Adrenal gland (tissue), 19 donors: ENCODE measurements at regions of chr2 and their contacts with region 1.

Region 1: GRCh38 chr2:181466661-181467576 is 9.7 kb downstream of the ITGA4 start:
- DNase-seq: peak; percentile 32 to 83 (median 62)
- H3K4me3 ChIP-seq: no peak overlapping the region
- H3K27ac ChIP-seq: no peak overlapping the region
- H3K4me1 ChIP-seq: no peaks in the 10 kb centered on the region
- H3K27me3 ChIP-seq: no peaks in the 10 kb centered on the region
- CTCF ChIP-seq: peak; percentile 39 to 79 (median 58)
- POLR2A ChIP-seq: no peak

Region 2: GRCh38 chr2:181117206-181117925 is 349.6 kb before region 1 on chr2:
- intact Hi-C with region 1: loop called in 1 of 2 experiments (anchors 10 kb)
- DNase-seq: peak in 3 of 7 donors; percentile 8 to 34 (median 27)
- H3K4me3 ChIP-seq: no peak overlapping the region
- H3K27ac ChIP-seq: no peak overlapping the region
- H3K4me1 ChIP-seq: no peaks in the 10 kb centered on the region
- H3K27me3 ChIP-seq: no peaks in the 10 kb centered on the region
- CTCF ChIP-seq: no peak
- POLR2A ChIP-seq: no peak

Region 3: DNA sequence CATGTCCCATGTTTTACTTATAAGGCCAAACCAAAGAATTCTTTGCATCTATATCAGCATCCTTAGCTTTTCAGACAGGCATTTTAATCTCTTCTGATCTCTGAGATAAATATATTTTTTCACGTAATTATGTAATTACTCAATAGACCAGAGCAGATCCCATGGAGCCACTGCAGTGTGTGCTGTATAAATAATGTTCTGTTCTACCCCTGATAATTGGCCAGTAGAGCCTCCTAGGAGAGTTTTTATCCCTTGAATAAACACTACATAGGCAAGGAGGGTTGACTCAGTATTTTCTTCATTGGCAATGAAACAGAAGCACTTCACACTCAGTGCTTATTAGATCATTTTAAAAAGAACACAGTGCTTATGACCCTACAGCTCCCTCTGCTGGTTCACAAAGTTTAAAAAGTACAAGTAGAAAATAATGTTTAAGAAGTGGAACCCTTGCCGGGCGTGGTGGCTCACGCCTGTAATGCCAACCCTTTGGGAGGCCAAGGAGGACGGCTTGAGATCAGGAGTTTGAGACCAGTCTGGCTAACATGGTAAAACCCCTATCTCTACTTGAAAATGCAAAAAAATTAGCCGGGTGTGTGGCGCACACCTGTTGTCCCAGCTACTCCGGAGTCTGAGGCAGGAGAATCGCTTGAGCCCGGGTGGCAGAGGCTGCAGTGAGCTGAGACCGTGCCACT is 610.7 kb after region 1 on chr2:
- intact Hi-C with region 1: no loop called
- DNase-seq: peak in 4 of 7 donors; percentile 41 to 50 (median 44)
- H3K4me3 ChIP-seq: no peak overlapping the region
- H3K27ac ChIP-seq: no peak overlapping the region
- H3K4me1 ChIP-seq: peaks cover 0 to 10% of the 10 kb centered on the region in 2 donors
- H3K27me3 ChIP-seq: no peaks in the 10 kb centered on the region
- CTCF ChIP-seq: peak; percentile 47 to 75 (median 58)
- POLR2A ChIP-seq: no peak